ENCODE measurements at regions of chr20 and their contacts with region 1.

Region 1: GRCh38 chr20:24034820-24035219 is 46.2 kb upstream of the GGTLC1 start:
- DNase-seq: no peak
- H3K4me3 ChIP-seq: no peak overlapping the region
- CTCF ChIP-seq: no peak

Region 2: GRCh38 chr20:25150016-25150415 is 1115.2 kb after region 1 on chr20:
- in situ Hi-C with region 1: loop called (anchors 10 kb)
- DNase-seq: no peak
- H3K4me3 ChIP-seq: no peak overlapping the region
- CTCF ChIP-seq: no peak

Measured in astrocyte of the cerebellum (primary cell).